PC-3 (cell line): ENCODE measurements at regions of chr12 and their contacts with region 1.

Region 1: GRCh38 chr12:53500776-53501614 is at the start of gene TARBP2:
- DNase-seq: peak; percentile 98
- ATAC-seq: peak; percentile 77
- H3K4me3 ChIP-seq: peak within 1 kb of the TSS; percentile 75
- H3K27ac ChIP-seq: peak within 1 kb of the TSS; percentile 85
- H3K4me1 ChIP-seq: peaks cover 33% of the 10 kb centered on the region
- H3K27me3 ChIP-seq: no peaks in the 10 kb centered on the region
- CTCF ChIP-seq: no peak
- total RNA-seq, gene TARBP2: 82.0 and 98.9 TPM in 2 replicates

Region 2: GRCh38 chr12:53098982-53099651 is 401.9 kb before region 1 on chr12:
- CTCF ChIA-PET with region 1: no interaction called
- POLR2A ChIA-PET with region 1: interaction called, 14 read pairs
- intact Hi-C with region 1: no loop called
- DNase-seq: peak; percentile 95
- ATAC-seq: peak; percentile 56
- H3K4me3 ChIP-seq: peak overlapping the region; percentile 96
- H3K27ac ChIP-seq: peak overlapping the region; percentile 83
- H3K4me1 ChIP-seq: peaks cover 39% of the 10 kb centered on the region
- H3K27me3 ChIP-seq: no peaks in the 10 kb centered on the region
- CTCF ChIP-seq: peak; percentile 87

Region 3: DNA sequence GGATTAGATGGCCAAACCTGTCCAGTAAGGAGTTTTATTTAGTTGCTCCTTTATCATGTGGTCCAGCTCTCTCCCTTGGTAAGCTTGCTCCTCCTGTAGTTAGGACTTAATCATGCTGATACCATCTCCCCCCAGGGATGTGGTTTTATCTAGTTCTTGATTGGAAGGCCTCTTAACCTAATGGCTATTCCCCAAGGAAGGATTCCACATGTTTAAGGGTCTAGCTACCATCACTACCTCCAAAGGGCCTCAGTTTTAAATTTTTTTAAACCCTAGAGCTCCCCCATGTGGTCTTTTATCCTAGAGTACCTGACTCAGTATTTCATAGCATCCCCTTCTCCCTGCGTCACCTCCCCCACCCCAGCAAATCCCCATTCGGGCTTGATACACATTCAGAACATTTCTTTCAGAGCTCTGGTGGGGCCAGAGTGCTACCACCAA is 24.2 kb before region 1 on chr12:
- CTCF ChIA-PET with region 1: interaction called, 16 read pairs
- POLR2A ChIA-PET with region 1: interaction called, 5 read pairs
- intact Hi-C with region 1: no loop called
- DNase-seq: peak; percentile 48
- ATAC-seq: peak; percentile 40
- H3K4me3 ChIP-seq: no peak overlapping the region
- H3K27ac ChIP-seq: no peak overlapping the region
- H3K4me1 ChIP-seq: no peaks in the 10 kb centered on the region
- H3K27me3 ChIP-seq: no peaks in the 10 kb centered on the region
- CTCF ChIP-seq: peak; percentile 61